Activated B cell treated with CpG ODN at 0.5 μM for 24 hours (primary cell): ENCODE measurements at regions of chr10 and their contacts with region 1.

Region 1: DNA sequence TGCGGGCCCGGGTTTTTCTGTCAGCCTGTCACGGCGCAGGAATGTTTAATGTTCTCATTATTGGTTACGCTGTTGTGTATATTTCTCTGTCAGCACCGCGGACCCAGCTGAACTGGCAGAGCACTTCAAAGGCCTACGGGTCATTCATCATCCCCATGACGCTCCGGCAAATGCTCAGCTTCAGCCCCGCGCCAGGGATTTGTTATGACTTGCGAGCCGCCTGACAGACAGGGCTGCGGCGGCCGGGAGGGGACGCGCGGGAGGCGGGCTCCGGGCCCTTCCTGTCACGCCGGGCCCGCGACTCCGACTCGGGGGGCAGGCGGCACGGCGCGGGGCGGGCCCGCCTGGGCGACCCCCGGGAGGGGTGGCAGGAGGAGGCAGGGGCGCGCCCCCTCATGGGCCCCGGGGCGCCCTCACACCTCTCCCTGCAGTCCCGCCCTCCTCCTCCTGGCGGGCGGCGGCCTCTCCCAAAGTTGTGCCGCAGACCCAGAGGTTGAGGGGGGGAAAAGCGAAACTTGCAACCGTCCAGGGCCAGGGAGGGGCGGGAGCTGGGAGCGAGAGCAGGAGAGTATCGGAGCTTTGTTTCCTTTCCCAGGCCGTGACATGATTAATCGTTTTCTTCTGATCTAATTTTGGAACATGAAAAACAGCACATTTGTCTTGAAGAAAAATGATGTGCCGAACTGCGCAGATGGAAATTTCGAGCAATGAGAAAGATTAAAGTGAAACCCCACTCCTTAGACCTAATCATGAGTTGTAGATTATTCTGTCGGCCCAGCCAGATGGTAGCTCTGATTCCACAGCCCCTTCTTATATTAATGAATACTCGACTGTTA is 59.3 kb upstream of the COMTD1 start:
- DNase-seq: peak; percentile 36
- ATAC-seq: peak; percentile 80
- H3K4me3 Mint-ChIP-seq: peak overlapping the region; percentile 78
- H3K27ac Mint-ChIP-seq: no peak overlapping the region
- H3K4me1 Mint-ChIP-seq: peaks cover 5% of the 10 kb centered on the region
- H3K27me3 Mint-ChIP-seq: peaks cover 26% of the 10 kb centered on the region
- CTCF ChIP-seq: no peak

Region 2: GRCh38 chr10:75202321-75203045 is 92.6 kb before region 1 on chr10:
- CTCF ChIA-PET with region 1: no interaction called
- POLR2A ChIA-PET with region 1: no interaction called
- intact Hi-C with region 1: no loop called
- DNase-seq: no peak
- ATAC-seq: no peak
- H3K4me3 Mint-ChIP-seq: no peak overlapping the region
- H3K27ac Mint-ChIP-seq: no peak overlapping the region
- H3K4me1 Mint-ChIP-seq: no peaks in the 10 kb centered on the region
- H3K27me3 Mint-ChIP-seq: no peaks in the 10 kb centered on the region
- CTCF ChIP-seq: no peak

Region 3: DNA sequence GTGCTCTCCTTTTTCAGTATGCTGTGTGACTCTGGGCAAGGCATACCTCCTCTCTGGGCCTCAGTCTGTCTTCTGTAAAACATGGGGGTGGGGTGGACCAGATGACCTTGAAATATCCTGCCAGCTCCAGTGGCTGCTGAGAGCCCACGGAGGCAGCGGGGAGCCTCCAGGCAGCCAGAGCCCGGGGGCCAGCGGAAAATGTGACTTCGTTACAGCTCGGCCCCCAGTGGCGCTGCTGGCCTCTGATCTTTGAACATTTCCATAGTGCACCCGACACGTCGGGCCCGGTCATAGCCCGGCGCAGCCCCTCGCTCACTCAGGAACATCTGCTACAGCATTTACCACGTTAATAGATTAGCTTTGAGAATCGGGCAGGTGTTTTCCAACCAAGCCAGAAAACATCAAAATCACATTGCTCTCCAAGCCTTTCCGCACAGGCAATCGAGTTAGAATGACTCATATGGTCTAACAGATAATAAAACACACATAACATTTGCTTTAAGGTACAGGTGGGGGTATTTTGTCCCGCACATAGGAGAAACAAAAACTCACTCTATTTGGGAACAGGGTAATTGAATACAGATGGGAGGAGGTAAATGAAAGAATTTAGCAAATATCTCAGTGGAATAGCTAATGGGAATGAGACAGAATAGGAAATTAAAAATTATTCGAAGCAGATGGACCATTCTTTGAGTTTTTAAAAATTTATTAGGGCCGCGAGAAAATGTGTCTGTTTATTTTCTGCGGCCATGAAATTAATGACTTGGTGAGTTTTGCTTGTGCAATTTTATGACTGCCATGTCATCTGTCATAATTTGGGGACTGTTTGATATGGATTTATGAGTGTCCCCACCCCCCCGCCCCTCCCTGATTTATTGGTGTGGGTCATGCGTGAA is 33.0 kb before region 1 on chr10:
- CTCF ChIA-PET with region 1: no interaction called
- POLR2A ChIA-PET with region 1: no interaction called
- intact Hi-C with region 1: loop called (anchors 1 kb)
- DNase-seq: no peak
- ATAC-seq: no peak
- H3K4me3 Mint-ChIP-seq: no peak overlapping the region
- H3K27ac Mint-ChIP-seq: no peak overlapping the region
- H3K4me1 Mint-ChIP-seq: no peaks in the 10 kb centered on the region
- H3K27me3 Mint-ChIP-seq: peaks cover 3% of the 10 kb centered on the region
- CTCF ChIP-seq: no peak